A549 (cell line): ENCODE measurements at regions of chr11 and their contacts with region 1.

Region 1: DNA sequence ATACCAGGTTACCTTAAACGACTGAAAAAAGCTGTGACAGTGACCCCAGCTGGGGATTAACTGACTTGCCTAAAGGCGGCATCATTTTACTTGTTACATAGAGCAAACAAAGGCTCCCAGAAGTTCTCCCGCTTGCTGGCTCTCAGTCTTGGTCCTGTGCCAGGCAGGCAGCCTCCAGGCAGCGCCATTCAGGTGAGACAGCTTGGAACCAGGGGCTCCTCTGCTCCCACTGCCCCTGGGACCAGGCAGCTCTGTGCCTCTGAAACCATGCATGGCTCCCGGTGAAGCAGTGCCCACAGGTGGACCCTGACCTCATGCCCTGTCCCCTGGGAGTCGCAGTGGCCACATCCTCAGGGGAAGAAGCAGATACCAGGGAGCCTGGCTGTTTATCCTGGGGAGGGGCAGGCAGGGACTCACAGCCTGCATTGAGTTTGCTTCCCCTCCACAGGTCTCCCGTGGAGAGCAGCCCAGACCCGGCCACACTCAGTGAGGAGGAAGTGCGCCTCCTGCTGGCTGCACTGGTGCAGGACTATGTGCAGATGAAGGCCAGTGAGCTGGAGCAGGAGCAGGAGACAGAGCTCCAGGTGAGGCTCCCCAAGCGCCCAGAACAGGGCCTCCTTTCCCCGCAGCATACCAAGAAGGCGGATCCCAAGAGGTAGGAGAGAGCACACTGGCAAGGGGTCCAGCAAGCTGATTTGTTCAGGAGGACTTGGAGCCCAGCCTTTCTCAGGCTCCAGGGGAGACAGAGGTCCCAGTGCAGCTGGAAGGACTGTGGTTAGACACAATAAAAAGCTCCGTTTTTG is 15.6 kb upstream of the CYP2R1 start:
- DNase-seq: peak; percentile 17 to 61
- ATAC-seq: peak; percentile 83 to 92
- H3K4me3 ChIP-seq: no peak overlapping the region
- H3K27ac ChIP-seq: no peak overlapping the region
- H3K4me1 ChIP-seq: peaks cover 6% of the 10 kb centered on the region; the same call in 2 of the 3 replicates
- CTCF ChIP-seq: peak; percentile 80
- EP300 ChIP-seq: no peak
- POLR2A ChIP-seq: no peak
- RAD21 ChIP-seq: peak; percentile 57 to 58

Region 2: GRCh38 chr11:14751975-14752407 is 155.6 kb before region 1 on chr11:
- CTCF ChIA-PET with region 1: no interaction called
- POLR2A ChIA-PET with region 1: no interaction called
- DNase-seq: no peak
- ATAC-seq: no peak
- H3K4me3 ChIP-seq: no peak overlapping the region
- H3K27ac ChIP-seq: no peak overlapping the region
- H3K4me1 ChIP-seq: no peaks in the 10 kb centered on the region
- CTCF ChIP-seq: no peak
- EP300 ChIP-seq: no peak
- POLR2A ChIP-seq: no peak
- RAD21 ChIP-seq: no peak

Region 3: GRCh38 chr11:14809466-14809865 is 98.1 kb before region 1 on chr11:
- CTCF ChIA-PET with region 1: interaction called, 19 read pairs
- POLR2A ChIA-PET with region 1: no interaction called
- DNase-seq: no peak
- ATAC-seq: no peak
- H3K4me3 ChIP-seq: no peak overlapping the region
- H3K27ac ChIP-seq: no peak overlapping the region
- H3K4me1 ChIP-seq: no peaks in the 10 kb centered on the region
- CTCF ChIP-seq: no peak
- EP300 ChIP-seq: no peak
- POLR2A ChIP-seq: no peak
- RAD21 ChIP-seq: no peak

Region 4: GRCh38 chr11:14835491-14836105 is 72.0 kb before region 1 on chr11:
- CTCF ChIA-PET with region 1: no interaction called
- POLR2A ChIA-PET with region 1: no interaction called
- DNase-seq: no peak
- ATAC-seq: no peak
- H3K4me3 ChIP-seq: no peak overlapping the region
- H3K27ac ChIP-seq: no peak overlapping the region
- H3K4me1 ChIP-seq: no peaks in the 10 kb centered on the region
- CTCF ChIP-seq: no peak
- EP300 ChIP-seq: no peak
- POLR2A ChIP-seq: no peak
- RAD21 ChIP-seq: no peak

Region 5: GRCh38 chr11:14927146-14927545 is 19.5 kb after region 1 on chr11:
- CTCF ChIA-PET with region 1: interaction called, 35 read pairs
- POLR2A ChIA-PET with region 1: no interaction called
- DNase-seq: no peak
- ATAC-seq: no peak
- H3K4me3 ChIP-seq: no peak overlapping the region
- H3K27ac ChIP-seq: no peak overlapping the region
- H3K4me1 ChIP-seq: no peaks in the 10 kb centered on the region
- CTCF ChIP-seq: no peak
- EP300 ChIP-seq: no peak
- POLR2A ChIP-seq: no peak
- RAD21 ChIP-seq: no peak

Region 6: DNA sequence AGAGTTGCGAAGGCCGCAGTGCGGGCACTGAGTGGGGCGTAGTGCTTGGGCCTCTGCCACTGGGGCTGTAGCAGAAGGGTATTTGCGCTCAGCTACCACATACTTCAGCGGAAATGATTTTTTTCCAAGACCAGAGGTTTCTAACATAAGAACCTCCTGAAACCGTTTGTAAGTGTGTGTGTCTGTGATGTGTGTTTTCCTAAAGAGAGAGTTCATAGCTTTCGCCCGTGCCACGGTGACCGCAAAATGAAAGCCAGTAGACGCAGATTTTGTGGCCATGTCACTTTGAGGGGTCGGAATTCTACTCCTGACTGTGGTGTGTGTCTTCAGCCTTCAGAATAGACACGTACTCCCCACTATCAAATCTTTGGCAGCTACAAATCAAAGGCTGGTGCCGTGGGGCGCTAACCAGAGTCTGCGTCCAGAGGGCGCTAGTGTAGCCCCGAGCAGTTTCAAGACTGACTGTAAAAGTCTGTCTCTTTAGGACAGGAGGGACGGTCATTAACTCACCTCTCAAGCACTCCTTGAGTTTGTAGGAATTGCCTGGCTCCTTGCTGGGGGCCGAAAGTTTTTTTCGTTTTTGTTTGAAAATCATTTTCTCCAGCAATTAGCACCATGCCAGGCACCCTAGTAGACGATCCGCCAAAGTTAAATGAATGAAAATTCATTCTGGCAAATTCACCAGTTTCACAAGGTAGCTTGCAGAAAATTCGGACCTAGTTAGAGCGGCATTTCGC is 67.1 kb after region 1 on chr11:
- CTCF ChIA-PET with region 1: interaction called, 21 read pairs
- POLR2A ChIA-PET with region 1: no interaction called
- DNase-seq: peak; percentile 49 to 64
- ATAC-seq: peak; percentile 73 to 87
- H3K4me3 ChIP-seq: peak overlapping the region; percentile 29; the same call in 2 of the 3 replicates
- H3K27ac ChIP-seq: no peak overlapping the region
- H3K4me1 ChIP-seq: 0 out of 3 replicates have a peak, but pooled peaks cover 7% of the 10 kb centered on the region
- CTCF ChIP-seq: peak; percentile 59
- EP300 ChIP-seq: no peak
- POLR2A ChIP-seq: no peak
- RAD21 ChIP-seq: peak; percentile 34 to 38; a peak in 3 of 5 replicates

Region 7: GRCh38 chr11:15074206-15075161 is 166.9 kb after region 1 on chr11:
- CTCF ChIA-PET with region 1: interaction called, 129 read pairs
- POLR2A ChIA-PET with region 1: no interaction called
- DNase-seq: peak; percentile 69 to 85
- ATAC-seq: peak; percentile 80 to 96
- H3K4me3 ChIP-seq: peak overlapping the region; percentile 49
- H3K27ac ChIP-seq: peak overlapping the region in 1 of 2 experiments; percentile 70; a peak in 3 of 6 replicates
- H3K4me1 ChIP-seq: peaks cover 17% of the 10 kb centered on the region
- CTCF ChIP-seq: peak; percentile 78
- EP300 ChIP-seq: no peak
- POLR2A ChIP-seq: no peak
- RAD21 ChIP-seq: peak; percentile 79 to 80